Gastrocnemius medialis (tissue), 4 donors: ENCODE measurements at regions of chr13 and their contacts with region 1.

Region 1: DNA sequence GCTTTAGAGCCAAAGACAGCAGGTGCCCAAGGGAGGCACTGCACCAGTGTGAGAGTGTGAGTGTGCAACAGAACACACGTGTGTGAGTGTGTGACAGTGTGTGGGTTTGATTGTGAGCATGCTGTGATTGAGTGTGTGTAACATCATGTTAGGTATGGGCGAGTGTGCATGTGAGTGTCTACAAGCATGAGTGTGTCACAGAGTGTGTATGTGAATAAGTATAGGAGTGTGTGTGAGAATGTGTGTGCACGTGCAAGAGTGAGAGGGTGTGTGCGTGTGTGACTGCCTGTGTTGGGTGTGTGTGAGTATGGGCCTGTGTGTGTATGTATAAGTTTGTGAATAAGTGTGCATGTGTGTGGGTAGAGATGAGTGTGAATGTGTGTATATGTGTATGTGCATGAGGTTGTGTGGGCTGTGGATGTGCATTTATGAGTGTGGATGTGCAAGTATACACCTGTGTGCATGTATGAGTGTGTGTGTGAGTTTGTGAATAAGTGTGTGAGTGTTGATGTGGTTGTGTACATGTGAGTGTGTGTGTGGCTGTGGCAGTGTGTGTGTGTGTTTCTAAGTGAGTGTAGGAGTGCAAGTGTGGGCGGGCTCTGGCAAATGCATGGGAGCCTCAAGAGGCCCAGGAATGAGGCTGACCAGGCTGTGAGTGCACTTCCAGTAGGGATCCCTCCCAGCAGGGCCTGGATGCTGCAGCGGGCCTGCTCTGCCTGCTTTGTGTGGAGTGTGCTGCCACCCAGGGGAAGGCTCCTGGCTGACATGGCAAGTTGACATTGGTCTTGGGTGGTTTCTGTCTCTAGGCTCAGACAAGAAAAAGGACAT is 198.4 kb downstream of the COL4A1 start:
- DNase-seq: peak; percentile 73 to 86
- ATAC-seq: peak; percentile 49 to 61
- H3K4me3 ChIP-seq: no peak overlapping the region
- H3K27ac ChIP-seq: peak overlapping the region; percentile 77 to 88 (median 82)
- H3K4me1 ChIP-seq: peaks cover 31 to 36% of the 10 kb centered on the region in 2 donors
- H3K27me3 ChIP-seq: no peaks in the 10 kb centered on the region
- CTCF ChIP-seq: peak; percentile 60 to 74 (median 66)
- POLR2A ChIP-seq: no peak

Region 2: DNA sequence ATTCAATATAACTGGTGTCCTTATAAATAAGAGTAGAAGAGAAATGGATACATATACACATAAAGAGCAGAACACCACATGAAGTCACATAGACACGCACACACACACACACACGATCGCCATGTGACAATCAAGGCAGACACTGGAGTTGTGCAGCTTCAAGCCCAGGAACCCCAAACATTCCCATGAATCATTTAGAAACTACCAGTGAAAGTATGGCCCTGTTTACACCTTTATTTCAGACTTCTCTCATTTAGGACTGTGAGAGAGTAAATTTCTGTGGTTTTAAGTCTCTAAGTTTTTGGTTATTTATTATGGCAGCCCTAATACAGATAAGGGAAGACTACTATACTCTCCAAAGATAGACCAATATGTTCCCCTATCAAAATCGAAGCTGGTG is 1859.4 kb before region 1 on chr13:
- in situ Hi-C with region 1: no loop called
- intact Hi-C with region 1: no loop called
- DNase-seq: no peak
- ATAC-seq: no peak
- H3K4me3 ChIP-seq: no peak overlapping the region
- H3K27ac ChIP-seq: no peak overlapping the region
- H3K4me1 ChIP-seq: no peaks in the 10 kb centered on the region
- H3K27me3 ChIP-seq: no peaks in the 10 kb centered on the region
- CTCF ChIP-seq: no peak
- POLR2A ChIP-seq: no peak

Region 3: GRCh38 chr13:109154966-109155761 is 953.4 kb before region 1 on chr13:
- in situ Hi-C with region 1: no loop called
- intact Hi-C with region 1: loop called (anchors 5 kb)
- DNase-seq: no peak
- ATAC-seq: peak in 1 of 2 donors; percentile 17
- H3K4me3 ChIP-seq: no peak overlapping the region
- H3K27ac ChIP-seq: peak overlapping the region in 2 of 4 donors; percentile 38 to 56
- H3K4me1 ChIP-seq: peaks cover 12 to 20% of the 10 kb centered on the region in 2 donors
- H3K27me3 ChIP-seq: no peaks in the 10 kb centered on the region
- CTCF ChIP-seq: no peak
- POLR2A ChIP-seq: no peak

Region 4: DNA sequence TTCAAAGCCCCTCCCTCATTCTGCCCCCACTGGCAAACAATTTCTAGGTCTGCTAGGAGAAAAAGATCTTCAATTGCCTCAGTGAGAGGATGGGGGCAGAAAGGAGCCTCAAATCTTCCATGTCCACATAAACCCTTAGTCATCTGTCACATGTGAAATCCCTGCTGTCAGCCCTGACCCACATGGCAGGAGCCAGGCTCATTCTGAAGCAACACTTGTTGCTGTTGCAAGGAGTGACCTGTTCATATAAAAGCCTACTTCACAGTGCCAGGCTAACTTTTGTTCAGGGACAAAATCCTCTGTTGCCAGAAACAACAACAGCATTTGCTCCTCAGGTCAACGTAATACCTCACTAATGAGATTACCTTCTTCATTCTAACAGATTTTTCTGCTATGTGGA is 392.7 kb before region 1 on chr13:
- in situ Hi-C with region 1: no loop called
- intact Hi-C with region 1: loop called (anchors 5 kb)
- DNase-seq: peak; percentile 53 to 82
- ATAC-seq: peak; percentile 99 to 100
- H3K4me3 ChIP-seq: no peak overlapping the region
- H3K27ac ChIP-seq: peak overlapping the region; percentile 24 to 61 (median 57)
- H3K4me1 ChIP-seq: peaks cover 0 to 6% of the 10 kb centered on the region in 2 donors
- H3K27me3 ChIP-seq: no peaks in the 10 kb centered on the region
- CTCF ChIP-seq: no peak
- POLR2A ChIP-seq: peak in 1 of 2 donors; percentile 12

Region 5: GRCh38 chr13:109859216-109859835 is 249.2 kb before region 1 on chr13:
- in situ Hi-C with region 1: no loop called
- intact Hi-C with region 1: loop called (anchors 5 kb)
- DNase-seq: peak; percentile 84
- ATAC-seq: peak; percentile 98 to 99
- H3K4me3 ChIP-seq: no peak overlapping the region
- H3K27ac ChIP-seq: peak overlapping the region; percentile 56 to 83 (median 74)
- H3K4me1 ChIP-seq: peaks cover 10 to 13% of the 10 kb centered on the region in 2 donors
- H3K27me3 ChIP-seq: no peaks in the 10 kb centered on the region
- CTCF ChIP-seq: no peak
- POLR2A ChIP-seq: peak in 1 of 2 donors; percentile 52

Region 6: DNA sequence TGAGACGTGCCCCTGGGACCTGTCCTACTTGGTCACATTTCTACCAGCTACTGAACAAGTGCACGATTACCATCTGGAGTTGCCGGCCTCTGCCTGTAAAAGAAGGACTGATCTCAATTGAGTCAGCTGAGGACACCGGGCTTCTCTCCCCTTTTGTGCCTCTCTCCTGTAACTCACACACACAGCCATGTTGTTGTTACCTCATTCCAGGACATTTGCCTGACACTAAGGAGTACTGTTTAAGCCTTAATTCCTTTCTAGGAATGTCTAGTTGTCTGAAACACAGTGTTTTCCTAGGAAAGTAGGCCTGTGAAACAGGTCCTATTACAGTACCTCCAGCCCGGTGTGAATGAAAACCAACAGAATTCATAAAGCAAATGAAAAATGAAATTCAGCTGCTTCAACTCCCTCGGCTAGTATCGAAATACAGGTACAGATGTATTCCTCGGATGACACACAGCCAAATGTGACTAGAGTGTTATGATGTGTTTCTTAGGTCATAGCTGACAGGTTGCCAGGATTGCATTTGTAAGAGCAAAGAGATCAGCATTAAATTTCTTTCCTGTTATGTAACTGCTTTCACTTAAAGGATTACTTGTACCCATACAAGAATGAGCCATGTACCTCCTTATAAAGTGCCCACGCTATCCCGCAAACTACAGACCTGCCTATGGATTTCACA is 170.2 kb before region 1 on chr13:
- in situ Hi-C with region 1: loop called in 1 of 4 experiments (anchors 10 kb)
- intact Hi-C with region 1: loop called (anchors 5 kb)
- DNase-seq: peak; percentile 40 to 71
- ATAC-seq: peak; percentile 95 to 98
- H3K4me3 ChIP-seq: no peak overlapping the region
- H3K27ac ChIP-seq: peak overlapping the region; percentile 65 to 81 (median 70)
- H3K4me1 ChIP-seq: peaks cover 11% of the 10 kb centered on the region in 2 donors
- H3K27me3 ChIP-seq: no peaks in the 10 kb centered on the region
- CTCF ChIP-seq: no peak
- POLR2A ChIP-seq: peak; percentile 12 to 53

Region 7: GRCh38 chr13:110097013-110097412 is 11.5 kb before region 1 on chr13:
- in situ Hi-C with region 1: no loop called
- intact Hi-C with region 1: loop called (anchors 1 kb)
- DNase-seq: no peak
- ATAC-seq: no peak
- H3K4me3 ChIP-seq: no peak overlapping the region
- H3K27ac ChIP-seq: no peak overlapping the region
- H3K4me1 ChIP-seq: peaks cover 18 to 22% of the 10 kb centered on the region in 2 donors
- H3K27me3 ChIP-seq: no peaks in the 10 kb centered on the region
- CTCF ChIP-seq: no peak
- POLR2A ChIP-seq: no peak